OCI-LY7 (cell line): ENCODE measurements at regions of chr1 and their contacts with region 1.

Region 1: GRCh38 chr1:203702130-203702577 is 62.8 kb upstream of the LAX1 start:
- DNase-seq: peak; percentile 77
- H3K4me3 ChIP-seq: no peak overlapping the region
- H3K27ac ChIP-seq: no peak overlapping the region
- H3K4me1 ChIP-seq: peaks cover 15% of the 10 kb centered on the region
- CTCF ChIP-seq: peak; percentile 98

Region 2: DNA sequence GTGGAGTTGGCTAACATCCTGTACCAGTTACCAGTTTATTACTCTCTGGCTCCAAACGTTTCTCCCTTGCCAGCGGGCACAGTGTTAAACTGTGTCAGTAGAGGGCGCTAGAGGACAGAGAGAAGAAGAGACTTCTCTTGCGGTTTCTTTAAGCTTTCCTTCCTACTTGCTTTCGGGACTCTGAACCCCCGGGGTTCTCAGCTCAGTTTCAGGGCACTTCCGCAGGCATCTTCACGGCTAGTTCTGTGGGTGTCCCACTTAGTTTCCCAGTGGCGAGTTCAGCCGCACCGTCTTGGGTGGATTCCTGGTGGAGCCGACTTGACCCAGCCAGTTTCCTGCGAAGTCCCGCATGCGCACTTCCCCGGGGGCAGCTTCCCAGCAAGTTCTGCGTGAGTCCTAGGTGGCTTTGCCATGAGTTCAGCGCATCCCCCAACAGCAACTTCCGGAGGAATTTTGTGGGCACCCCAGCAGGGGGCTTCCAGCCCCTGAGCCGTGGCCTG is 434.8 kb before region 1 on chr1:
- CTCF ChIA-PET with region 1: interaction called, 4 read pairs
- POLR2A ChIA-PET with region 1: interaction called, 3 read pairs
- intact Hi-C with region 1: loop called (anchors 5 kb)
- DNase-seq: peak; percentile 87
- H3K4me3 ChIP-seq: peak overlapping the region; percentile 33
- H3K27ac ChIP-seq: no peak overlapping the region
- H3K4me1 ChIP-seq: peaks cover 81% of the 10 kb centered on the region
- CTCF ChIP-seq: peak; percentile 98

Region 3: GRCh38 chr1:203504397-203505250 is 197.5 kb before region 1 on chr1:
- CTCF ChIA-PET with region 1: interaction called, 11 read pairs
- POLR2A ChIA-PET with region 1: no interaction called
- intact Hi-C with region 1: loop called (anchors 1 kb)
- DNase-seq: peak; percentile 81
- H3K4me3 ChIP-seq: no peak overlapping the region
- H3K27ac ChIP-seq: no peak overlapping the region
- H3K4me1 ChIP-seq: no peaks in the 10 kb centered on the region
- CTCF ChIP-seq: peak; percentile 96

Region 4: DNA sequence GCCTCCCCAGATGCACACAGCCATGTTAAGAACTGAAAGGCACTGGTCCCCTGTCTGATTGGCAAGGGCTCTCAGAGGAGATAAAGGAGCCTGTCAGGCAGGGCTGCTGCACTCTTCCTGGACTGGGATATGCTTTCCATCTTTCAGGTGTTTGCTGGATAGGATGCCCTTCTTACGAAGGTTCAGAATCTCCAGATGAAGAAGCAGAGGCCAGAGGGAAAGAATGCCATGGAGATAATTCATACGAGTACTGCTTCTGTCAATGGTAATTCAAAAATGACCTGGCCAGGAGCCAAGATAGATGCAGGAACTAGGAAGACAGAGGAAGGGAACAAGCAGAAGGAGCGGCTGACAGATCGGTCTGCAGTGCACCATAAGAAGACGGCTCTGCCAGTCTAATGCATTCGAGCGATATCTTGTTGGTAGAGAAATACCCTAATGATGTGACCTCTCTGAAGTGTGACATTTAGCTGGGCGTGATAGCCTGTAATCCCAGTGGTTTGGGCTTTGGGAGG is 92.1 kb before region 1 on chr1:
- CTCF ChIA-PET with region 1: no interaction called
- POLR2A ChIA-PET with region 1: no interaction called
- intact Hi-C with region 1: loop called (anchors 1 kb)
- DNase-seq: no peak
- H3K4me3 ChIP-seq: no peak overlapping the region
- H3K27ac ChIP-seq: no peak overlapping the region
- H3K4me1 ChIP-seq: peaks cover 15% of the 10 kb centered on the region
- CTCF ChIP-seq: no peak

Region 5: GRCh38 chr1:203769505-203770343 is 67.6 kb after region 1 on chr1:
- CTCF ChIA-PET with region 1: no interaction called
- POLR2A ChIA-PET with region 1: interaction called, 3 read pairs
- intact Hi-C with region 1: loop called (anchors 5 kb)
- DNase-seq: no peak
- H3K4me3 ChIP-seq: no peak overlapping the region
- H3K27ac ChIP-seq: no peak overlapping the region
- H3K4me1 ChIP-seq: peaks cover 19% of the 10 kb centered on the region
- CTCF ChIP-seq: no peak